ENCODE measurements at regions of chr22 and their contacts with region 1.

Region 1: GRCh38 chr22:50525390-50526068 is at the start of gene SCO2:
- DNase-seq: peak; percentile 77 to 97
- H3K4me3 ChIP-seq: peak within 1 kb of the TSS; percentile 75 to 79
- H3K27ac ChIP-seq: peak within 1 kb of the TSS; percentile 85 to 93
- H3K4me1 ChIP-seq: peaks cover 6 to 20% of the 10 kb centered on the region in 2 donors
- H3K27me3 ChIP-seq: no peaks in the 10 kb centered on the region
- CTCF ChIP-seq: peak; percentile 47 to 54 (median 54)
- total RNA-seq, gene SCO2: not detected

Region 2: GRCh38 chr22:50562523-50563412 is 37.2 kb after region 1 on chr22 and contains the start of gene SYCE3:
- intact Hi-C with region 1: loop called (anchors 1 kb)
- DNase-seq: peak; percentile 87 to 97
- H3K4me3 ChIP-seq: peak within 1 kb of the TSS; percentile 66 to 70
- H3K27ac ChIP-seq: no peak within 1 kb of the TSS
- H3K4me1 ChIP-seq: peaks cover 0 to 8% of the 10 kb centered on the region in 2 donors
- H3K27me3 ChIP-seq: no peaks in the 10 kb centered on the region
- CTCF ChIP-seq: peak; percentile 91 to 99 (median 98)
- total RNA-seq, gene SYCE3: not detected

Region 3: DNA sequence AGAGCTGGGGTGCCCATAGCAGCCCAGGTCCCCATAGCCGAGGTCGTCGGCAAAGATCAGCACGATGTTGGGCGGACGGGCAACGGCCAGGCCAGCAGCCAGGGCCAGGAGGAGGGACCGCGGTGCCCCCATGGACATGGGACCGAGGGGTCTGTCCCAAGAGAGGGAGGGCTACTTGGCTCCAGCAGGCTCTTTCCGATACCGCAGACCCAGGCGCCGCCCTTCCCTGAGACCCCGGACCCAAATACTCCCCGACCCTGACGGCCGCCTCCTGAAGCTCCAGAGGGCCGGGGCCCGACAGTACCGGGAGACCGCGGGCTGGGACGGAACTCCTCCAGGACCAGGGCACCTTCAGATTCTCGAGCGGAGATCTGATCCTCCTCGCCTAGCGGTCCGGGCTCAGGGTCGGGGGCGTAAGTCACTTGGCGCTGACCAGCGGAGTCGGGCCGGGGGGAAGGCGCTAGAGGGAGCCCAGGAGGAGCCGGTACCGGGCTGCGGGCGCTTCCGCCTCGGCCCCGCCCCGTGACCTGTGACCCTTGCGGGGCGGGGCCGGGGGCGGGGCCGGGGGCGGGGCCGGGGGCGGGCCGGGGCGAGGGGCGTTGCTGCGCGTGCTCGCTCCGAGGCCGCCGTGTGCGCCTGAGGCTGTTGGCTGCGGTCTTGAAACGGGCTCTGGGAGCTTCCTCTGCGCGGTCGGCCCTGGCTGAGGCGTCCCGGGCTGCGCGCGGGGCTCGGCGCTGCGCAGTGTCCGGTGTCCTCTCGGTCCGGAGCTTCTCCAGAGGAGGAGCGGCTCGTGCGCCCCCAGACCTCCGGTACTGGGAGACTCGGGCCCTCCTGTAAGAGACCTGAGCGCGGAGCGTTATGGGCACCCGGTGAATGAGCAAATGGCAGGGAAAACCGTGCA is 102.4 kb after region 1 on chr22 and contains the start of gene ARSA:
- intact Hi-C with region 1: loop called (anchors 5 kb)
- DNase-seq: peak; percentile 27 to 86
- H3K4me3 ChIP-seq: peak within 1 kb of the TSS; percentile 63 to 67
- H3K27ac ChIP-seq: peak within 1 kb of the TSS; percentile 46 to 84
- H3K4me1 ChIP-seq: peaks cover 4 to 12% of the 10 kb centered on the region in 2 donors
- H3K27me3 ChIP-seq: no peaks in the 10 kb centered on the region
- CTCF ChIP-seq: peak; percentile 1 to 47 (median 18)
- total RNA-seq, gene ARSA: 111 TPM